ENCODE measurements at regions of chr18 and their contacts with region 1.

Region 1: DNA sequence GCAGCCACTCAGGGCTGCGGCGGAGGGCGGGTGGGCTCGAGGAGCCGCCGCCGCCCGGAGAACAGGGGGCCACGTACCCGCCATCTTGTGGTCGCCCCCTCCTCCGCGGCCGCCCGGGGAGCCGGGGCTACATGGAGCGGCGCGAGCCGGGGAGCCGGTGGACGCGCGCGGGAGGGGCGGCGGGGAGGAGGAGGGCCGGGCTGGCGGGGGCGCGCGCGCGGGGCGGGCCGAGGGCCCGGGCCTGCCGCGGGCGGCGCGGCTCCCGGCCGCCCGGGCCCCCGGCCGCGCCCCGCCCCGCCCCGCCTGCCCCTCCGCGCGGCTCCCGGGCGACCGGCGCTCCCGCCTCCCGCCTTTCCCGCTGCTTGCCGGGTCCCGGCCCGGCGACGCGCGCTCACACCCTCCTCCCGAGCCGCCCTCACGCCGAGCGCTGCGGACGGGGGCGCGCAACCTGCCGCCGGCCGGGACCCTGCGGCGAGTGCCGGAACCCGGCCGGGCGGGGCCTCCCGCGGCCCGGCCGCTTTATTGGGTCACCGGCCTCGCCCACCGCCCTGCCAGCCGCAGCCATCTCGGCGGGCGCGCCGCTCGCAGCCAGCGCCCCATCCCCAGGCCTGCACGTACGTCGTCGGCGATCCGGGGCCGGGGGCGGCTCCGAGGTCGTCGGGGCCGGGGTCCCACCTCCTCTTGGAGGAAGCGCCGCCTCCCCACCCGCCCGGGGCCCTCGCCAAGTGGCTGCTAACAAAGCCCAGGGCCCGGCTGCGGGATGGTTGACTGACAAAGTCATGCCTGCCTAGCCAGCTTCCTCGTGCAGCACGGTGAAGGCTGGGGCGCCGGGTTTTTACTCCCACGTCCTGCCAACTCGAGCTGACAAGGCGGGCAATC is at the start of gene PPP4R1:
- DNase-seq: peak; percentile 60 to 97 (median 74)

Region 2: DNA sequence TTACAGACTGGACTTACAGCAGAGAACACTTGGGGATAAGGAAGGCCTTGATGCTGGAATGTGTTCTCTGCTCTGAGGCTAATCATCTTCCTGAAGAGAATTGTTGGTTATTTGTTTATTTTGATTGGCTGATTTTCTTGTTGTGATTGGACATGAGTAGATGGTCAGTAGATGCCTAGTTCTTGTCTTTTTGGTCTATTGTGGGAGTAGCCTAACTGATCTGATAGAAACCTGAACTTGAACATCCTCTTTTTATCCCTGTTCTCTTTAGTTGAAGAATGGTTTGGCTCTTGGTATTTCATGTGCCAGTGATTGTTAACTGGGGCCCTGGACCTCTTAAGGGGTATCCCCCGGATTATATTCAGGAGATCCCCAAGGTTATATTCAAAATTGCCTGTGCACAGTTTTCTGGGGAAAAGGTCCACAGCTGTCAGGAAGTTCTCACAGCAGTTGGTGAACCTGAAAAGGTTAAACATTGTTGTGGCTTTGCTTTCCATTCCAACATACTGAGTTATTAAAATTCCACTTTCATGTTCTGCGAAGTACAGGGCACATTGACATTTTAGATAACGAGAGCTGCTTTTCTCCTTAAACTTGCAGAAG is 266.5 kb before region 1 on chr18:
- intact Hi-C with region 1: no loop called
- DNase-seq: no peak

Region 3: DNA sequence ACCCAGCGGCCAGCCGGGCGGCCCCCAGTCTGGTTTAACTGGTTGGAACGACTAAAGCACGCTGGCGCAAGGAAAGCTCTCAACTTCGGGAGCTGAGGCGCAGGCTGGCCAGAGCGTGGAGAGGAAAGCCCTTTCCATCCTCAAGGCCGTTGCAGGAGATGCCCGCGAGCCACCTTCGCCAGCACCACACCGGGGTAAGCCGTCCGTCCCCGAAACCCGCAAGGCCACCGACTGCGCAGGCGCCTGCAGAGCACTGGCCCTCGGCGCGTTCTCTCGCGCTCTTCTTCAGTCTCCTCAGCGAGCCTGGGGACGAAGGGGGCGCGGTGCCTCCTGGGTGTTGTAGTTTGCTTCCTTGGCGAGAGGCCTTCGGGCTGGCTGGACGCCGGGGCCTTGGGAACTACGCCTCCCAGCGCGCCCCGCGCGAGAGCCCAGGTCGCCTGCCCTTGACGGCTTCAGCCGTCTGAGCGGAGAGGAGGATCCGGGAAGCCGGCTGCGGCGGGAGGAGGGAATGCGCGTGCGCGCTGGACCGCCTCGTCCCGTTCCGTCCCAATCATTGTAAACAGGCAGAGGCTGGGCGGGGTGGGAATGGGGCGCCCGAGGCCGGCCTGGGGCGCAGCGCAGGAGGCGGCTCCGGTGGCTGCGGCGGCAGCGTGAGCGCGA is 139.5 kb before region 1 on chr18 and contains the start of gene RALBP1:
- intact Hi-C with region 1: loop called (anchors 5 kb)
- DNase-seq: peak; percentile 99 to 100 (median 100)

Region 4: GRCh38 chr18:9516437-9517064 is 98.1 kb before region 1 on chr18:
- intact Hi-C with region 1: no loop called
- DNase-seq: no peak

Region 5: GRCh38 chr18:9661564-9661963 is 46.9 kb after region 1 on chr18:
- intact Hi-C with region 1: loop called (anchors 10 kb)
- DNase-seq: no peak

Region 6: DNA sequence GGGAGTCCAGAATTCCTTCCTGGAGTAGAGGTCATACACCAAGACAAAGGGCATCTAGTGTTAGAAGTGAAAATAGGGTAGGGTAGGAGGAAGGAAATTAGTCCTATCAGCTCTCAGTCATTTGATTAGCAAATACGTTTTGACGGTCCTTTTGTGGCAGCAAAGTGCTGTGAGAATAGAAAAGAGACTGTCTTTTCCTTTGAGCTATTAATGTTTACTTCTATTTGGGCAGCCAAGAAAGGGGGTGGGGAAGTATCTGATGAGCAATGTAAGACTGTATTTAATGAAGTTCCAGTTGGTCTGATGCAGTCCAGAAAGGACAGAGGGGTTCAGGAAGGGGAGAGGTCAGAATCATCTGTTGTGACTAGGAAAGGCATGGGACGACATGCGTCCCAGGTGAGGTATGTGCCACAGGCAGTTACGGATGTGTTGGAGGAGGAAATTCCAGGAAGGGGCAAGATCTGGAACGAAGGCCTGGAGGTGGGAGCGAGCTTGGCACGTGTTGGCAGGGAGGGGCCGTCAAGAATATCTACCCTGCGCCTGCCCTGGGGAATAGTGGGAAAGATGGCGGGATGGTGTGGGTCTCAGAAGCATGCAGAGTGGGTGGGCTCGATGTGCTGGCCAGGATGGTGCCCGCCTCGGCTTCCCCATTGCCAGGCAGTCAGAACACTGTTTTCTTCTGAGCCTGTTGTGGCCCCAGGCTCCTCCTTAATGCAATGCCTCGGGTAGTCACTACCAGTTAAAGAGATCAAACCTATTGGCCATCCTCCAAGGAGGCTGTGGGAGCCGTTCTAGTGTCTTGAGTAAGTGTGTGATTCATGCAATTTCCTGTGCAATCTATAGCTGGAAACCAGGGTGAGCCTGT is 213.2 kb after region 1 on chr18:
- intact Hi-C with region 1: no loop called
- DNase-seq: no peak

Region 7: GRCh38 chr18:9913526-9914333 is 299.1 kb after region 1 on chr18 and contains the start of gene VAPA:
- intact Hi-C with region 1: loop called (anchors 1 kb)
- DNase-seq: peak; percentile 94 to 99 (median 98)

Region 8: DNA sequence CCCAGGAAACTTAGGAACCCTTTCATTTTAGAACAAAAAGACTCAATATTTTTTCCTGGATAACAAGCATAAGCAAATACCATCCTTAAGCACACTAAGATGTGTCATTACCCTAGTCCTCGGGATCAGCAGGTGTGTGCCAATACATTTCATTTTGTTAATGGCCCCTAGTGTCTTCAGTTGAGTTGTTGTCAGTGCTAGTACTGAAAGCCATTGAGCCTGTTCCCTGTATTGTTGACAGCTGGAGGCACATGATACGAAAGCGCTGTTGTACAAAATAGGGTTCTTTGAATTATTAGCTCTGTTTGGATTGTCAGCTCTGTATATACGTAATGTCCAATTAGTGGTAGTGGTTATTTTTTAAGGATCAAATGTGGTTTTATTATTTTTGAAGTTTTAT is 328.7 kb after region 1 on chr18:
- intact Hi-C with region 1: no loop called
- DNase-seq: no peak

Measured in posterior cingulate gyrus (tissue), 11 donors.